ENCODE measurements at regions of chr20 and their contacts with region 1.

Region 1: GRCh38 chr20:50575847-50576720 is 65.9 kb downstream of the PTPN1 start:
- DNase-seq: peak; percentile 74
- ATAC-seq: peak; percentile 85
- H3K4me3 ChIP-seq: no peak overlapping the region
- H3K4me3 Mint-ChIP-seq: no peak overlapping the region
- H3K27ac ChIP-seq: no peak overlapping the region
- H3K27ac Mint-ChIP-seq: peak overlapping the region; percentile 78
- H3K4me1 ChIP-seq: peaks cover 18 to 34% of the 10 kb centered on the region in 2 donors
- H3K4me1 Mint-ChIP-seq: peaks cover 48% of the 10 kb centered on the region
- H3K27me3 ChIP-seq: no peaks in the 10 kb centered on the region
- H3K27me3 Mint-ChIP-seq: no peaks in the 10 kb centered on the region
- CTCF ChIP-seq: peak; percentile 70

Region 2: GRCh38 chr20:50353289-50353961 is 222.7 kb before region 1 on chr20:
- CTCF ChIA-PET with region 1: no interaction called
- POLR2A ChIA-PET with region 1: no interaction called
- intact Hi-C with region 1: no loop called
- DNase-seq: no peak
- ATAC-seq: no peak
- H3K4me3 ChIP-seq: no peak overlapping the region
- H3K4me3 Mint-ChIP-seq: no peak overlapping the region
- H3K27ac ChIP-seq: no peak overlapping the region
- H3K27ac Mint-ChIP-seq: no peak overlapping the region
- H3K4me1 ChIP-seq: peaks cover 6 to 8% of the 10 kb centered on the region in 2 donors
- H3K4me1 Mint-ChIP-seq: peaks cover 13% of the 10 kb centered on the region
- H3K27me3 ChIP-seq: peaks cover 0 to 10% (median 0%) of the 10 kb centered on the region in 4 experiments
- H3K27me3 Mint-ChIP-seq: peaks cover 25% of the 10 kb centered on the region
- CTCF ChIP-seq: no peak

Region 3: GRCh38 chr20:50460460-50461267 is 115.4 kb before region 1 on chr20:
- CTCF ChIA-PET with region 1: interaction called, 169 read pairs
- POLR2A ChIA-PET with region 1: no interaction called
- intact Hi-C with region 1: loop called (anchors 5 kb)
- DNase-seq: peak; percentile 78
- ATAC-seq: peak; percentile 81
- H3K4me3 ChIP-seq: no peak overlapping the region
- H3K4me3 Mint-ChIP-seq: no peak overlapping the region
- H3K27ac ChIP-seq: no peak overlapping the region
- H3K27ac Mint-ChIP-seq: no peak overlapping the region
- H3K4me1 ChIP-seq: peaks cover 3 to 7% of the 10 kb centered on the region in 2 donors
- H3K4me1 Mint-ChIP-seq: peaks cover 2% of the 10 kb centered on the region
- H3K27me3 ChIP-seq: peaks cover 0 to 21% (median 5%) of the 10 kb centered on the region in 4 experiments
- H3K27me3 Mint-ChIP-seq: peaks cover 24% of the 10 kb centered on the region
- CTCF ChIP-seq: peak; percentile 85

Region 4: DNA sequence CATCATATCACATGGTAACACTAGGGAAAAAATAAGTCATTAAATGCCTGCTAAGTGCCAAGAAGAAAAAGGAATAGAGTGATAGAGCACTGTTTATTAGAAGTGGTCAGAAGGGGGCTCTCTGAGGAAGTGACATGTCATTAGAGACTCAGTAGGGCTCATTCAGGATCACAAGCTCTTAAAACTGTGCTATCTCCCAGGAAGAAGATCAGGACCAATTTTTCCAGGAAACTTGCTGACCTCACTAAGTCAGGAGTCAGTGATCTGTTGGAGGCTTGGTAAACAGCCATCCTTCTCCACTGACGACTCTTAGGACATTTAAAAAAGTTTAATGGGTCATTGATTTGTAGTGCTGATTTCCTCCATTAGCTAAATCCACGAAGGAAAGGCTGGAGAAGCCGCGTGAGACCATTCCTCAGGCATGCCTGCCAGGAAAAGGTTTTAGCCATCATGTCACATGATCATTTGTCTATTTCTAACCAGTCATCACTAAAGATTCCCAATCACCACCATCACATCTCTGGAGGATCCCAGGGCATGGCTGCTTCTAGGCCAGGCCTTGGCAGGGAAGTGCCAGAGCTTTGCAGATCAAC is 71.8 kb before region 1 on chr20:
- CTCF ChIA-PET with region 1: interaction called, 292 read pairs
- POLR2A ChIA-PET with region 1: no interaction called
- intact Hi-C with region 1: loop called (anchors 1 kb)
- DNase-seq: peak; percentile 65
- ATAC-seq: peak; percentile 72
- H3K4me3 ChIP-seq: no peak overlapping the region
- H3K4me3 Mint-ChIP-seq: peak overlapping the region; percentile 40
- H3K27ac ChIP-seq: no peak overlapping the region
- H3K27ac Mint-ChIP-seq: peak overlapping the region; percentile 75
- H3K4me1 ChIP-seq: peaks cover 9 to 34% of the 10 kb centered on the region in 2 donors
- H3K4me1 Mint-ChIP-seq: peaks cover 36% of the 10 kb centered on the region
- H3K27me3 ChIP-seq: no peaks in the 10 kb centered on the region
- H3K27me3 Mint-ChIP-seq: no peaks in the 10 kb centered on the region
- CTCF ChIP-seq: peak; percentile 56

Region 5: DNA sequence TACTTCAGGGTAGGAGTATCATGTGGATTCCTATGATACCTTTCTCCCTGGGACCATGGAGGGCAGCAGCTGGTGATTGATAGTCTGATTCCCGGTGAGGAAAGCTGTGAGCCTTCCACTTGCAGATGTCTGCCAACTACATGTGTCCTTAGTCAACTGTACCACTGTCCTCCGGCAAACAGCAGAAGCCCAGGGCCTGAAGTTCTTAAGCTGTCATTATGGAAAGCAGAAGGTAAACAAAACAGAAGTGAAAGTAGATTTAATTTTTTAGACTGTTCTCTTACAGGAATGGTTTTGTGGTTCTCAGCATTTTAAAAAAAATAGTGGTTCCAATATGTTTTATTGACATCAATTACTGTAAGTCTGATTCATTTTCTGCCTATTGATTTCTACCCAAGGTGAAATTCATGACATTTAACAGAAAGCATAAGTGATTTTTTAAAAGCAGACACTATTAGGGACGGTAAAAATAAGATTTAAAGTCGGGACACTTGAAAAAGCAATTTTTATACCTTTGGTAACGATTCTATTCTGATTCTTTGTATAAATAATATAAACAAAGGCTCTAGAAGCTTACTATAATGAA is 29.3 kb before region 1 on chr20:
- CTCF ChIA-PET with region 1: interaction called, 49 read pairs
- POLR2A ChIA-PET with region 1: no interaction called
- intact Hi-C with region 1: loop called (anchors 5 kb)
- DNase-seq: peak; percentile 70
- ATAC-seq: peak; percentile 78
- H3K4me3 ChIP-seq: peak overlapping the region in 4 of 5 experiments; percentile 2 to 39 (median 20)
- H3K4me3 Mint-ChIP-seq: peak overlapping the region; percentile 88
- H3K27ac ChIP-seq: peak overlapping the region; percentile 48 to 83
- H3K27ac Mint-ChIP-seq: peak overlapping the region; percentile 93
- H3K4me1 ChIP-seq: peaks cover 93 to 96% of the 10 kb centered on the region in 2 donors
- H3K4me1 Mint-ChIP-seq: peaks cover 68% of the 10 kb centered on the region
- H3K27me3 ChIP-seq: no peaks in the 10 kb centered on the region
- H3K27me3 Mint-ChIP-seq: no peaks in the 10 kb centered on the region
- CTCF ChIP-seq: no peak

Region 6: GRCh38 chr20:50588034-50588611 is 12.0 kb after region 1 on chr20:
- CTCF ChIA-PET with region 1: interaction called, 36 read pairs
- POLR2A ChIA-PET with region 1: no interaction called
- intact Hi-C with region 1: no loop called
- DNase-seq: peak; percentile 79
- ATAC-seq: peak; percentile 58
- H3K4me3 ChIP-seq: no peak overlapping the region
- H3K4me3 Mint-ChIP-seq: no peak overlapping the region
- H3K27ac ChIP-seq: no peak overlapping the region
- H3K27ac Mint-ChIP-seq: peak overlapping the region; percentile 50
- H3K4me1 ChIP-seq: peaks cover 4 to 10% of the 10 kb centered on the region in 2 donors
- H3K4me1 Mint-ChIP-seq: peaks cover 13% of the 10 kb centered on the region
- H3K27me3 ChIP-seq: no peaks in the 10 kb centered on the region
- H3K27me3 Mint-ChIP-seq: no peaks in the 10 kb centered on the region
- CTCF ChIP-seq: peak; percentile 98